ENCODE measurements at regions of chr7 and their contacts with region 1.

Region 1: GRCh38 chr7:137656227-137656849 is 190.4 kb downstream of the DGKI start:
- DNase-seq: peak; percentile 70
- CTCF ChIP-seq: peak; percentile 83

Region 2: GRCh38 chr7:137633133-137633532 is 23.2 kb before region 1 on chr7:
- CTCF ChIA-PET with region 1: interaction called, 11 read pairs
- POLR2A ChIA-PET with region 1: no interaction called
- DNase-seq: no peak
- CTCF ChIP-seq: no peak

Region 3: DNA sequence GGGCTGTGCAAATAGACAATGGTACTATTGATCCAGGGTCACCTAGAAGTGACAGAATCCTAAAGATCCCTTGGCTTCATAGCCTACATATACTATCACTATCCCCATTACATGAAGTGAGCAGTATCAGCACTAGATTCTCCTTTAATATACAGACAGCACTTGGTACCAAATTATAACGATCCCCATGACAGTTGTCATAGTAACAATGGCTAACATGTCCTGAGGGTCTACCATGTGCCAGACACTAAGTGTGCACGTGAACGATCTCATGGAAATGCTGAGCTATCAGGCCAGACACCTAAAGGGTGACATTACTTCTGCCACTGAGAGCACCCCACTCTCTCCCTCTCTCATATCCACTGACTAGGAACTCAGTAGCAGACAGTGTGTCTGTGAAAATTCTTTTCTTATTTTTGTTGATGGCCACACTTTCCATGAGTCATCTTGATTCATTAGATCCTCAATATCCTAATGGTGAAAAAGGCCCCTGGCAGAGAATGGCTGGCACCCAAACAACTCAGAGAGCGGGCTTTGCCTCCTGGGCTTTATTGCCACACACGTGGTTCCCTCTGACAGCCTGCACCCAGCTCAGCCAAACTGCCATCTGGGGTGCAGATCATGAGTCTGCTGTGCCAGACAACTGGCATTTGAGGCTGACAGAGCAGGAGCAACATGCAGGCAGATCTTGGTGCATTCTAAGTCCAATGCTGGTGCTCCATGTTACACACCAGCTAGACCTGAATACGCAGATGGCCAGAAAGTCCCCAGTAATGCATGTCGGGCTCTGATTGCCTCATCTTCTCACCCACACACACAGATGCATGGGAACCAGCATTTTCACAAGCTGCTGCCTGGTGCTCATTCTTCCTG is 14.1 kb after region 1 on chr7:
- CTCF ChIA-PET with region 1: interaction called, 128 read pairs
- POLR2A ChIA-PET with region 1: no interaction called
- DNase-seq: peak; percentile 45
- CTCF ChIP-seq: no peak

Region 4: DNA sequence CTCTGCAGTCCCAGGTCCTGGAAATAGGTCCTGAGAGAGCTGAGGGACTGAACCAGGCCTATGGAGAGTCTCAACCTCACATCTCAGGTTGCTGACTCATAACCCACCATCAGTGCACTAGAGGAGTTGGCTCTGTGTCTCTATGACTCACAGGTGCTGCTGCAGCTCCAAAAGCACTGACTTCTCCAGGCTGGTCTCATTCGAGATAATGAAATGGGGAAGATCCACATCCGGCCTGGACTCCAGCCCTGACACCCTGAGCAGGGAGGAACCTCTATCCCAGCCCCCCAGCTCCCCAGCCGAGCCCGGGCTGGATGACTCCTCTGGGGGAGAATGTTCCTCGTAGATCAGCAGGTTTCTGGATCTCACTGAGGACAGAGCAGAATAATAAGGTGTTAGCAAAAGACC is 225.9 kb after region 1 on chr7:
- CTCF ChIA-PET with region 1: interaction called, 14 read pairs
- POLR2A ChIA-PET with region 1: no interaction called
- DNase-seq: peak; percentile 70
- CTCF ChIP-seq: no peak

Region 5: GRCh38 chr7:138008547-138009349 is 352.4 kb after region 1 on chr7:
- CTCF ChIA-PET with region 1: interaction called, 16 read pairs
- POLR2A ChIA-PET with region 1: no interaction called
- DNase-seq: peak; percentile 57
- CTCF ChIP-seq: peak; percentile 78

Region 6: DNA sequence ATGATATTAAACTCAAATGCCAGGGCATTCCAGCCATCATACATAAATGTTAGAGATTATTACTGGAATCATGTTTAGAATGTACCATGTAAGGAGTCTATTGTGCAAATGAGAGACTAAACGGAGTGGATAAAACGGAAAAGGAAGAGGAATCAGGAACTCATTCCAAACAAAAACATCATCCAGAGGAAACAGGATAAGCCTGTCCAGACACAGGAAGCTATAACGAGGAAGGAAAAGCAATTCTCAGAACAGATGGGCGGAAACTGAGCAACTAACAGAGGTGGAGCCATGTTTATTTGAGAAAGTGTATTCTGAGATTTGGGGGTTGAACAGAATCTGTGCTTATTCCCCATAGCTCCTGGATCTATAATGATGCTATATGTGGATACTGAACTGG is 751.5 kb after region 1 on chr7:
- CTCF ChIA-PET with region 1: no interaction called
- POLR2A ChIA-PET with region 1: no interaction called
- DNase-seq: no peak
- CTCF ChIP-seq: no peak

Measured in GM10248 (cell line).